Heart right ventricle (tissue), 16 donors: ENCODE measurements at regions of chr13 and their contacts with region 1.

Region 1: DNA sequence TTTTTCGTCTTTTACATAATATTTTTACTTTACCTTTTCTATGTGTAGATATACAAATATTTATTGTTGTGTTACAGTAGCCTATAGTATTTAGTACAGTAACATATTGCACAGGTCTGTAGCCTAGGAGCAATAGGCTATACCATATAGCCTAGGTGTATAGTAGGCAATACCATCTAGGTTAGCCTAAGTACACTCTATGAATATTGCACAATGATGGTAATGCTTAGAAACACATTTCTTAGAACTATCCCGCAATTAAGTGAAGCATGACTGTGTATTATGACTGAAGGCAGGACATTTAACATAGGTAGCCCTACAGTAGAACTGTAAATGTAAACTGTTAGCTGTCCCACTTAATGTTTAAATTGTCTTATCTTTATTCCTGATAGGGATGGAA is 964.3 kb downstream of the SLITRK1 start:
- DNase-seq: no peak
- ATAC-seq: no peak
- H3K4me3 ChIP-seq: no peak overlapping the region
- H3K27ac ChIP-seq: no peak overlapping the region
- H3K4me1 ChIP-seq: no peaks in the 10 kb centered on the region
- H3K27me3 ChIP-seq: no peaks in the 10 kb centered on the region
- CTCF ChIP-seq: no peak

Region 2: GRCh38 chr13:82800391-82800790 is 117.6 kb before region 1 on chr13:
- intact Hi-C with region 1: no loop called
- DNase-seq: no peak
- ATAC-seq: no peak
- H3K4me3 ChIP-seq: no peak overlapping the region
- H3K27ac ChIP-seq: no peak overlapping the region
- H3K4me1 ChIP-seq: no peaks in the 10 kb centered on the region
- H3K27me3 ChIP-seq: no peaks in the 10 kb centered on the region
- CTCF ChIP-seq: no peak

Region 3: GRCh38 chr13:82976499-82976898 is 58.5 kb after region 1 on chr13:
- intact Hi-C with region 1: loop called in 1 of 10 experiments (anchors 2 kb)
- DNase-seq: no peak
- ATAC-seq: no peak
- H3K4me3 ChIP-seq: no peak overlapping the region
- H3K27ac ChIP-seq: no peak overlapping the region
- H3K4me1 ChIP-seq: no peaks in the 10 kb centered on the region
- H3K27me3 ChIP-seq: no peaks in the 10 kb centered on the region
- CTCF ChIP-seq: no peak

Region 4: GRCh38 chr13:83048419-83048818 is 130.4 kb after region 1 on chr13:
- intact Hi-C with region 1: no loop called
- DNase-seq: no peak
- ATAC-seq: no peak
- H3K4me3 ChIP-seq: no peak overlapping the region
- H3K27ac ChIP-seq: no peak overlapping the region
- H3K4me1 ChIP-seq: no peaks in the 10 kb centered on the region
- H3K27me3 ChIP-seq: no peaks in the 10 kb centered on the region
- CTCF ChIP-seq: no peak

Region 5: DNA sequence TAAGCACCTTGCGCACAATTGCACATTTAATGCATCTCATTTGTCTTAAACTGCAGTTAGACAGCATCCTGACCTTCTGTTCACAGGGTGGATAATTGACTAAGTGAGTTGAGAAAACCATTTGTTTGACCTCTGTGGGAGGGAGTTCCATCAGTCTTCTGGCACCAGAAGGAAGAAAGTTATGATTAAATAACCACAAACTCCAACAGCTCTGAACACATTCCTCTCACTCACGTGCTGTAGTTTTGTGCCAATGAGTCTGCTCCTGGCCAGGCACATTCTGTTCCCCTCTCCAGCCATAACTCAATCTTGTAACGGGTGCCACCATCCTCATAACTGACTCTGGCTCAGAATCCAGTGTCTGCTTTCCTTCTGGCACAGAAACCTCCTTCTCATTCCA is 147.1 kb after region 1 on chr13:
- intact Hi-C with region 1: no loop called
- DNase-seq: no peak
- ATAC-seq: peak in 3 of 8 donors; percentile 20 to 74 (median 35)
- H3K4me3 ChIP-seq: no peak overlapping the region
- H3K27ac ChIP-seq: no peak overlapping the region
- H3K4me1 ChIP-seq: no peaks in the 10 kb centered on the region
- H3K27me3 ChIP-seq: no peaks in the 10 kb centered on the region
- CTCF ChIP-seq: no peak

Region 6: GRCh38 chr13:83136660-83137059 is 218.7 kb after region 1 on chr13:
- intact Hi-C with region 1: no loop called
- DNase-seq: no peak
- ATAC-seq: no peak
- H3K4me3 ChIP-seq: no peak overlapping the region
- H3K27ac ChIP-seq: no peak overlapping the region
- H3K4me1 ChIP-seq: no peaks in the 10 kb centered on the region
- H3K27me3 ChIP-seq: no peaks in the 10 kb centered on the region
- CTCF ChIP-seq: no peak